H1 (cell line): ENCODE measurements at regions of chr6 and their contacts with region 1.

Region 1: GRCh38 chr6:81734085-81734484 is 18.4 kb downstream of the TENT5A start:
- DNase-seq: no peak
- H3K4me3 ChIP-seq: no peak overlapping the region
- H3K27ac ChIP-seq: no peak overlapping the region
- H3K4me1 ChIP-seq: no peaks in the 10 kb centered on the region
- H3K27me3 ChIP-seq: no peaks in the 10 kb centered on the region
- CTCF ChIP-seq: peak in 1 of 3 experiments; percentile 30; a peak in 1 of 4 replicates
- EP300 ChIP-seq: no peak
- POLR2A ChIP-seq: no peak
- RAD21 ChIP-seq: peak; percentile 54 to 57

Region 2: DNA sequence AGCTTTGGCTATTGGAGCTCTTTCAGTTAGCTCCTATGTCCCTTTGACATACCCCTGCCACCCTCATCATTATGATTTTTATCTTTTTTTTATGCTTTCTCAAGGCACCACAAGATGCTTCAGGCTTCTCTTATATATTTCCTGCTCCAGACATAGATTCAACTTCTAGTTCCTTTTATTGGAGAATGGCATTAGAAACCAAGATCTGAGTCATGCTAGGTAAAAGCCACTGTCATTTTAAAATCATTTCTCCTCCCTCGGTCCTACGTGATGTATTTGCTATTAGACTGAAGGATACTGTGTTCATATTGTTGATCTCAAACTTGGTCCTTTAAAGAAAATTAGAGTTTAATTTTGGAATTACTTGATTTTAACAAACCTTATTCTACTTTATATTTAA is 10.0 kb after region 1 on chr6:
- CTCF ChIA-PET with region 1: interaction called, 14 read pairs
- POLR2A ChIA-PET with region 1: no interaction called
- DNase-seq: no peak
- H3K4me3 ChIP-seq: no peak overlapping the region
- H3K27ac ChIP-seq: no peak overlapping the region
- H3K4me1 ChIP-seq: no peaks in the 10 kb centered on the region
- H3K27me3 ChIP-seq: no peaks in the 10 kb centered on the region
- CTCF ChIP-seq: no peak
- EP300 ChIP-seq: no peak
- POLR2A ChIP-seq: no peak
- RAD21 ChIP-seq: no peak

Region 3: GRCh38 chr6:81752138-81752920 is 18.2 kb after region 1 on chr6 and contains the start of gene TENT5A:
- CTCF ChIA-PET with region 1: interaction called, 24 read pairs
- POLR2A ChIA-PET with region 1: no interaction called
- DNase-seq: peak; percentile 75 to 90
- H3K4me3 ChIP-seq: peak within 1 kb of the TSS; percentile 65 to 84 (median 78)
- H3K27ac ChIP-seq: no peak within 1 kb of the TSS
- H3K4me1 ChIP-seq: peaks cover 2 to 6% (median 3%) of the 10 kb centered on the region in 4 experiments; a peak in 4 of 7 replicates
- H3K27me3 ChIP-seq: peaks cover 0 to 24% (median 10%) of the 10 kb centered on the region in 4 experiments; a peak in 5 of 7 replicates
- CTCF ChIP-seq: no peak
- EP300 ChIP-seq: no peak; a peak in 1 of 3 replicates
- POLR2A ChIP-seq: peak; percentile 46 to 58; a peak in 2 of 3 replicates
- RAD21 ChIP-seq: no peak
- total RNA-seq, gene TENT5A: 2.9 and 3.1 TPM in 2 replicates